Caco-2 (cell line): ENCODE measurements at regions of chr16 and their contacts with region 1.

Region 1: GRCh38 chr16:589658-590159 is at the start of gene RAB40C:
- DNase-seq: peak; percentile 97 to 98
- H3K4me3 ChIP-seq: peak within 1 kb of the TSS; percentile 77
- H3K4me3 Mint-ChIP-seq: peak within 1 kb of the TSS; percentile 75
- H3K27ac Mint-ChIP-seq: peak within 1 kb of the TSS; percentile 95
- H3K4me1 ChIP-seq: peaks cover 32% of the 10 kb centered on the region
- H3K4me1 Mint-ChIP-seq: peaks cover 25% of the 10 kb centered on the region
- H3K27me3 ChIP-seq: no peaks in the 10 kb centered on the region
- H3K27me3 Mint-ChIP-seq: no peaks in the 10 kb centered on the region
- CTCF ChIP-seq: no peak
- total RNA-seq, gene RAB40C: 18.7 and 19.1 TPM in 2 replicates

Region 2: DNA sequence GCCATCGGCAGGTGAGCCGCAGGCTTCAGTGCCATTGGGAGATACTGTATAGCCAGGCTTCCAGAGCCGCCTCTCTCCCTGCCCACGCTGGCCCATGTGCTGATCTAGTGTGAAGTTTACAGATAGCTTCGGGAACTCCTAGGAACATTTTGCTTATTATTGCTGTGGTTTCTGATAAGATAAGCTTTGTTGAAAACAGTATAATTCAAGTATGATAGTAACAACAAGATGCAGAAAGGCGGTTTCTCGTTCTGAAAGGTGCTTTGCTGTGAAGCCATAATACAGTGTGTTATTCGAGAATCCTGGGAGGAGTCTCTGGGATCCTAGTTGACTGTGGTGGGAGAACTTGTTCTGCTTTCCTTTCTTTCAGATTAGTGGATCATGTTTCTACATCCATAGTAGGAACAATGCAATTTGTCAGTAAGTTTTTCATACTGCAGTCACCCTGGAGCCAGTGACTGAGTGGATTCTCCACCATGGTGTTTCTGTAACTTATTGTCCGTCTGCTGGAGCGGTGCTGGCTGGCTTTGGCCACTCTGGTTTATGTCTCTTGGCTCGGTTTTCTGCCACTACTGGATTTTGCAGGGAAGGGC is 132.7 kb before region 1 on chr16:
- CTCF ChIA-PET with region 1: no interaction called
- POLR2A ChIA-PET with region 1: interaction called, 11 read pairs
- intact Hi-C with region 1: no loop called
- DNase-seq: no peak
- H3K4me3 ChIP-seq: no peak overlapping the region
- H3K4me3 Mint-ChIP-seq: no peak overlapping the region
- H3K27ac Mint-ChIP-seq: no peak overlapping the region
- H3K4me1 ChIP-seq: peaks cover 14% of the 10 kb centered on the region
- H3K4me1 Mint-ChIP-seq: peaks cover 5% of the 10 kb centered on the region
- H3K27me3 ChIP-seq: no peaks in the 10 kb centered on the region
- H3K27me3 Mint-ChIP-seq: no peaks in the 10 kb centered on the region
- CTCF ChIP-seq: no peak

Region 3: GRCh38 chr16:527006-527753 is 62.5 kb before region 1 on chr16 and contains the start of gene CAPN15:
- CTCF ChIA-PET with region 1: interaction called, 3 read pairs
- POLR2A ChIA-PET with region 1: no interaction called
- intact Hi-C with region 1: loop called (anchors 5 kb)
- DNase-seq: peak; percentile 89 to 92
- H3K4me3 ChIP-seq: peak within 1 kb of the TSS; percentile 76
- H3K4me3 Mint-ChIP-seq: peak within 1 kb of the TSS; percentile 73
- H3K27ac Mint-ChIP-seq: peak within 1 kb of the TSS; percentile 70
- H3K4me1 ChIP-seq: peaks cover 9% of the 10 kb centered on the region
- H3K4me1 Mint-ChIP-seq: no peaks in the 10 kb centered on the region
- H3K27me3 ChIP-seq: no peaks in the 10 kb centered on the region
- H3K27me3 Mint-ChIP-seq: no peaks in the 10 kb centered on the region
- CTCF ChIP-seq: peak in 1 of 2 experiments; percentile 23
- total RNA-seq, gene CAPN15: 85.3 and 87.9 TPM in 2 replicates

Region 4: DNA sequence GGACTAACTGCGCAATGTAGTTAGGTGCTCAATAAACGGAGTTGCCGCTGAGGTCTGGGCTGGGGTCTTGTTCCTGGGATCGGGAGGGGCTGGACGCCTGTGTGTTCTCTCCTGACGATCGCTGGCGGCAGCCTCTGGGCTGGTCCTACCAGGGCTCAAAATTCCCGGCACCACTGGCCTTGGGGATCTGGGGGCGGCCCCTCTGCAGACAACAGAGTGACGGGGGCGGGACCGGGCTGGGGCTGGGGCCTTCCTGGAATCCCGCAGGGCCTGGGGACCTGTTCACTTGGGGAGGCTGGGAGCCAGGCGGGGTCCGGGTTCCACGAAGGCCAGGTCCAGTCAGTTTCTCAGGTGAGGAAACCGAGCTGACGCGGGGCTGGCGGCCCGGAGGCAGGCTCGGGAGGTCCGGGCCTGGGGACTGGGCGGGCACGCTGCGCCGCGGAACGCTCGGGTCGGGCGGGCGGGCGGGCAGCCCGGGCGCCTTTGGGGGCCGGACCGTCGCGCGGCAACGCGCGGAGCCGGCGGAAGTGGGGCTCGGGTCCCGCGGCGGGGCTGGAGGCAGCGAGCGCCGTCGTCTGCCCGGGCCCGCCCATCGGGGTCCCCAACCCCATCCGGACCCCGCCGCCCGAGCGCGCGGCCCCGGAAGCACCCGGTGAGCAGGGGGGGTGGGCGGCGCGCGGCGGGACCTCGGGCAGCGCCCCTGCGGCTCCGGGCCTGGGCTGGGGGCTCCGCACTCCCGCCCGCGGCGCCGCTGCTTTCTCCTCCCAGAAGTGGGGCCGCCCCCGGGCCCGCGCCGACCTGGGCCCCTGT is 20.1 kb before region 1 on chr16 and contains the start of gene PIGQ:
- CTCF ChIA-PET with region 1: no interaction called
- POLR2A ChIA-PET with region 1: no interaction called
- intact Hi-C with region 1: no loop called
- DNase-seq: peak; percentile 69 to 73
- H3K4me3 ChIP-seq: peak within 1 kb of the TSS; percentile 59
- H3K4me3 Mint-ChIP-seq: peak within 1 kb of the TSS; percentile 75
- H3K27ac Mint-ChIP-seq: peak within 1 kb of the TSS; percentile 85
- H3K4me1 ChIP-seq: peaks cover 9% of the 10 kb centered on the region; the same call in 1 of the 2 replicates
- H3K4me1 Mint-ChIP-seq: peaks cover 12% of the 10 kb centered on the region
- H3K27me3 ChIP-seq: no peaks in the 10 kb centered on the region
- H3K27me3 Mint-ChIP-seq: no peaks in the 10 kb centered on the region
- CTCF ChIP-seq: no peak
- total RNA-seq, gene PIGQ: 45.3 and 45.8 TPM in 2 replicates

Region 5: DNA sequence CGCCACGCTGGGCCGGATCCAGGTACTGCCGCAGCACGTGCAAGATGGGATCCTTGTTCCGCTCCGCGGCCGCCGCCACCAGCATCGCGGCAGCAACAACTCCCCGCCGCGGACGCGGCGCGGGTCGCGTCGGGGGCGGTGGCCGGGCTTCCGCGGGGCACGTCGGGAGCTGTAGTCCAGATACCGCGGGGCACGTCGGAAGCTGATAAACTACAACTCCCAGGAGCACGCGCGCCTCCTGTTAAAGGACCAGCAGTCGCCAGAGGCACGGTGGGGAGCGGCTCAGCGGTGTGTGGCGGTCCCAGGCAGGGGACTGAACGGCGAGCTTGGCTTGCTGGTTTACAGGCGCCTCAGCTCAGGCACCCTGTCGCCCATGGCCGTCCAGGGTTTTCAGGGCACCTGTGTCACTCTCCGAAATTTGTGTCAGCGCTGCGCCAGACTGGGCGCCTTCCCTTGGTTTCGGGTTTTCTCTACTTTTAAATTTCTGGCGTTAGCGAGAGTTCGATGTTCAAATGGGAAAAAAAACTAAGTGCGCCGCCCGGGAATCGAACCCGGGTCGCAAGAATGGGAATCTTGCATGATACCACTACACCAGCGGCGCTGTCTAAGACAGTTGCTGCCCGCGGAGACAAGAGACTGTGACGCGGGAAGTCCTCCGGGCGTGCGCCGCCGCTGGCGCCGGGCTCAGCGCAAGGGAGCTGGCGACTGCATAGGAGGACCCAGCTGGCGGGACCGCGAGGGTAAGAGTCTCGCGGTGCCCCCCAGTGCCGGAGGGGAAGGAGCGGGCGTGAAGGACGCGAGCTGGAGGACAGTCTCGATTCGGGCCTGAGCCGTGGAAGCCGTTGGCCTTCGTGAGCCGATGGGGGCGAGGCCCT is 46.7 kb after region 1 on chr16 and contains the start of gene METTL26:
- CTCF ChIA-PET with region 1: interaction called, 5 read pairs
- POLR2A ChIA-PET with region 1: no interaction called
- intact Hi-C with region 1: loop called (anchors 2 kb)
- DNase-seq: peak; percentile 92 to 95
- H3K4me3 ChIP-seq: peak within 1 kb of the TSS; percentile 73
- H3K4me3 Mint-ChIP-seq: peak within 1 kb of the TSS; percentile 93
- H3K27ac Mint-ChIP-seq: peak within 1 kb of the TSS; percentile 98
- H3K4me1 ChIP-seq: peaks cover 10% of the 10 kb centered on the region
- H3K4me1 Mint-ChIP-seq: no peaks in the 10 kb centered on the region
- H3K27me3 ChIP-seq: no peaks in the 10 kb centered on the region
- H3K27me3 Mint-ChIP-seq: no peaks in the 10 kb centered on the region
- CTCF ChIP-seq: peak in 1 of 2 experiments; percentile 3
- total RNA-seq, gene METTL26: 67.1 and 67.4 TPM in 2 replicates